ENCODE measurements at regions of chr12 and their contacts with region 1.

Region 1: DNA sequence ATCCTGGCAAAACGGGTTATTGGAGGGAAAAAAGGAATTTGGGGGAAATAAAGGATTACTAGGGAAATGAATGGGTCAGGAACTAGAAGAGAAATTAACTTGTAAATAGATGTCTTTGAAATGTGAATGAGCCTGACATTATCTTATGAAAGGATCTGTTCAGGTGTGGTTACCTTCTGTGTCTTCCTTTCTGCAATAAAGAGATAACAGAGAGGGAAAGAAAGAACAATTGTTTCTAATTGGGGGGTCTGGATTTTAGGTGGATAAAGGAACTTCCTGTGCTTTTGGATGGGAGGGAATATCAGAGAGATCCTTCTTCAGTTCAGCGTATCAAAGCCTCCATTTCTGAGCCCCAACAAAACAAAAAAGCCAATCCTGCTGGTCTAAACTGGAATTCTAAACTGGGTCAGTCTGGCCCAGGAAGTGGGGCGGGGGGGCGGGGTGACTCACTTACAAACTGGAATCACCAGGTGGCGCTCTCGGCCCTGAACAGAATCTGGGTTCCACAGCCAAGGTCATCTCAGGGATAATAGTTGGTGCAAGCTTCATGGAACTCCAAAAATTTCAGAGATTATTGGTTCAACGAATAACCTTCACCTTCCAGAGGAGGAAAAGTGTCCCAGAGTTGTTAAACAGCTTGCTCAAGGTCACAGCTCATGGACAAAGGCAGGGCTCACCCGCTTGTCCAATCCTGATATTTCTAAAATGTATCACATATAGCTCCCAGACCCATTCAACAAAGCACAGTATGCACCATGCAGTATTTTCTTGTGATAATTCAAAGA is 15.2 kb upstream of the PEBP1 start:
- DNase-seq: no peak
- H3K4me3 ChIP-seq: no peak overlapping the region
- H3K27me3 ChIP-seq: no peaks in the 10 kb centered on the region
- CTCF ChIP-seq: peak; percentile 82

Region 2: DNA sequence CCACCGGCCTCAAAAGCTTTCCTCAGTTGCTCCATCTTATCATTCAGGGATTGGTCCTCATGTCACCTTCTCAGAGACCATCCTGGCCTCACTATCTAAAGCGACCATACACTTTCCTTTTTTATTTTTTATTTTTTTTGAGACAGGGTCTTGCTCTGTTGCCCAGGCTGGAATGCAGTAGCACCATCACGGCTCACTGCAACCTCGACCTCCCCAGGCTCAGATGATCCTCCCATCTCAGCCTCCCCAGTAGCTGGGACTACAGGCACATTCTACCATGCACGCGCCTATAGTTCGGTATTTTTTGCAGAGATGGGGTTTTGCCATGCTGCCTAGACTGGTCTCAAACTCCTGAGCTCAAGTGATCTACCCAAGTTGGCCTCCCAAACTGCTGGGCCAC is 62.5 kb before region 1 on chr12:
- CTCF ChIA-PET with region 1: no interaction called
- POLR2A ChIA-PET with region 1: interaction called, 12 read pairs
- DNase-seq: no peak
- H3K4me3 ChIP-seq: no peak overlapping the region
- H3K27me3 ChIP-seq: no peaks in the 10 kb centered on the region
- CTCF ChIP-seq: no peak

Region 3: GRCh38 chr12:118109088-118109487 is 11.7 kb before region 1 on chr12:
- CTCF ChIA-PET with region 1: interaction called, 18 read pairs
- POLR2A ChIA-PET with region 1: no interaction called
- DNase-seq: no peak
- H3K4me3 ChIP-seq: no peak overlapping the region
- H3K27me3 ChIP-seq: no peaks in the 10 kb centered on the region
- CTCF ChIP-seq: no peak

Region 4: DNA sequence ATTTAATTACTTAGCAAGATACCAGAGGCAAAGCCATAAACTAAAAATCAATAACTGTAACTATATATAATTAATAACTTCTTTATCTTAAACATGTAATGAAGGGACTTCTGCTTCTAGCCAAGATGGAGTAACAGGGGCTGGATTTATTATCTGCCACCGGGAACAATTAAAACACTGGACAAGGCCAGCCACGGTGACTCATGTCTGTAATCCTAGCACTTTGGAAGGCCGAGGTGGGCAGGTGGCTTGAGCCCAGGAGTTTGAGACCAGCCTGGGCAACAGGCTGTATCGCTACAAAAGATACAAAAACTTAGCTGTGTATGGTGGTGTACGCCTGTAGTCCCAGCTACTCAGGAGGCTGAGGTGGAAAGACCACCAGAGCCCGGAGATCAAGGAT is 138.3 kb after region 1 on chr12:
- CTCF ChIA-PET with region 1: no interaction called
- POLR2A ChIA-PET with region 1: no interaction called
- DNase-seq: no peak
- H3K4me3 ChIP-seq: no peak overlapping the region
- H3K27me3 ChIP-seq: no peaks in the 10 kb centered on the region
- CTCF ChIP-seq: no peak

Measured in BJ (cell line).